ENCODE measurements at regions of chr4 and their contacts with region 1.

Region 1: GRCh38 chr4:70818173-70818855 is 21.4 kb downstream of the GRSF1 start:
- DNase-seq: no peak
- H3K4me3 ChIP-seq: no peak overlapping the region
- H3K27ac ChIP-seq: no peak overlapping the region
- H3K4me1 ChIP-seq: peaks cover 4% of the 10 kb centered on the region
- CTCF ChIP-seq: no peak

Region 2: DNA sequence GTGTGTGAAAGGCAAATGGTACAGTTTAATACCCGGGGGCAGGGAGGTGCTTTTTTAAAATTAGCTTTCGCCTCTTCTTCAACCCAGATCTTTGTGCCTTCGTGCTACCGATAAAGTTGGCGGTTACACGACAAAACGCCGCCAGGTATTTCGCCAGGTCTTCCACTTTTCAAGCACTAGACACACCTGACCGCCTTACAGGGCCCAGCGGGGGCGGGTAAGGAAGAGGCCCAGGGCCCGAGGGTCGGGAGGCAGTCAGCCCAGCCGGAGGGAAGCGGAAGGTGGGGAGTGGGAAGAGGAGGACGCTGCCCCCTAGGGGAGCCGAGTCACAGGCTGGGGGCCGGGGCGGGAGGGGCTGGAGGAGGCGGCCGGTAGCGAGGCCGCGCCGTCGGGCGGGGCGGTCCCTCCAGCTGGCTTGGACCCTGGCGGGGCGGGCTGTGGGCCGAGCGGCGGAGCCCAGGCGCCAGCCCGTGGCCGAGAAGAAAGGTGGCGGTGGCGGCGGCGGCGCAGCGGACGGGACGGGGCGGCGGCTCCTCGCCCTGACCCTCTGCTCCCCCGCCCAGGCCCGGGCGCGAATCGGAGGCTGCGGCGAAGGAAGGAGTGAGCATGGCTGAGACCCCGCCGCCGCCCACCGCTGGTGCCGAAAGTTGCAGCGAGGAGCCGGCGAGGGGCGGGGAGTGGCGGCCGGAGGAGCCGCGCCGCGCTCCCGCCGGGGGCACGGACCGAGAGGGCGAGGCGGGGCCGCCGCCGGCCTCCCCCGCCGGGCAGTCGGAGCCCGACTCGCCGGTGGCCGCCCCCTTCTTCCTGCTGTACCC is 113.8 kb before region 1 on chr4:
- CTCF ChIA-PET with region 1: no interaction called
- POLR2A ChIA-PET with region 1: no interaction called
- intact Hi-C with region 1: no loop called
- DNase-seq: peak; percentile 85
- H3K4me3 ChIP-seq: peak overlapping the region; percentile 90
- H3K27ac ChIP-seq: peak overlapping the region; percentile 77
- H3K4me1 ChIP-seq: peaks cover 32% of the 10 kb centered on the region
- CTCF ChIP-seq: peak; percentile 71

Region 3: GRCh38 chr4:70833675-70834074 is 15.4 kb after region 1 on chr4:
- CTCF ChIA-PET with region 1: interaction called, 3 read pairs
- POLR2A ChIA-PET with region 1: interaction called, 8 read pairs
- intact Hi-C with region 1: loop called (anchors 2 kb)
- DNase-seq: no peak
- H3K4me3 ChIP-seq: no peak overlapping the region
- H3K27ac ChIP-seq: no peak overlapping the region
- H3K4me1 ChIP-seq: peaks cover 22% of the 10 kb centered on the region
- CTCF ChIP-seq: no peak

Region 4: GRCh38 chr4:71732066-71732465 is 913.8 kb after region 1 on chr4:
- CTCF ChIA-PET with region 1: no interaction called
- POLR2A ChIA-PET with region 1: no interaction called
- intact Hi-C with region 1: no loop called
- DNase-seq: no peak
- H3K4me3 ChIP-seq: no peak overlapping the region
- H3K27ac ChIP-seq: no peak overlapping the region
- H3K4me1 ChIP-seq: no peaks in the 10 kb centered on the region
- CTCF ChIP-seq: no peak

Measured in OCI-LY7 (cell line).